ENCODE measurements at regions of chr10 and their contacts with region 1.

Region 1: DNA sequence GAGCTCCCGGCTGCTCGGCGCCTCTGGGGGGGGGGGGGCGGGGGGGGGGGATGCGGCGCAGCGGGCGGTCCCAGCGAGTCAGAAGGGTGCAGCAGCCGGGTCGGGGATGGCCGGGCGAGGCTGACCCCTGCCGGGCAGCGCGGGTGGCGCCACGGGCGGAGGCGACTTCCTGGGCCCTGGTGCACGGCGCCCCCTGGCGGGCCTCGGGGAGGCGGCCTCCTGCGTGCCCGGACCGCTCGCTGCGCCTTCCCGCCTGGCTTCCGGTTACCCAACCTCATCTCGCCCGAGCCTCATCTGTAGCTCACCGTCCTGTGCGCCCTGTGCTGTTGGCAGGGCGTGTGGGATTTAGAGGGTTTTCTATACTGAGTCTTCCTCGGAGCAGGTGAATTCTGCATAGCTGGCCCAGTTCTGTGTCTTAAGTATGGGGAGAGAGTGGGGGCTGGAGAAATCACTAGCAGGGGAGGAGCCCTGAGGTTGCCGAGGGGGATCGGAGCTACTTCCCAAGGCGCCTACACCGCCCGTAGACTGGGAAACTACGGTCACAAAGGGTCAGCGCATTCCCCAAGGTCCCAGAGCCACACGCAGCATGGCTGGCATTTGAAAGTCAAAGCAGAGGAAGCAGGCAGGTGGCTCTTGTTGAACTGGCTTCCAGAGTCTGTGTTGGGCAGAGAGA is 28.3 kb upstream of the WDFY4 start:
- DNase-seq: peak in 1 of 2 donors; percentile 96
- H3K4me3 ChIP-seq: peak overlapping the region; percentile 52 to 72
- H3K27ac ChIP-seq: peak overlapping the region; percentile 77 to 79
- H3K4me1 ChIP-seq: peaks cover 3 to 4% of the 10 kb centered on the region in 2 donors
- H3K27me3 ChIP-seq: no peaks in the 10 kb centered on the region
- CTCF ChIP-seq: peak; percentile 78 to 100 (median 89)

Region 2: GRCh38 chr10:48306265-48306869 is 350.0 kb before region 1 on chr10 and contains the start of gene MAPK8:
- intact Hi-C with region 1: loop called (anchors 2 kb)
- DNase-seq: peak; percentile 71 to 95
- H3K4me3 ChIP-seq: peak within 1 kb of the TSS; percentile 88 to 99
- H3K27ac ChIP-seq: peak within 1 kb of the TSS; percentile 94 to 96
- H3K4me1 ChIP-seq: peaks cover 0 to 7% of the 10 kb centered on the region in 2 donors
- H3K27me3 ChIP-seq: no peaks in the 10 kb centered on the region
- CTCF ChIP-seq: no peak
- total RNA-seq, gene MAPK8: 7.7 TPM

Region 3: GRCh38 chr10:48523820-48524758 is 132.3 kb before region 1 on chr10:
- intact Hi-C with region 1: loop called (anchors 10 kb)
- DNase-seq: no peak
- H3K4me3 ChIP-seq: peak overlapping the region; percentile 54 to 71
- H3K27ac ChIP-seq: peak overlapping the region in 1 of 2 donors; percentile 28
- H3K4me1 ChIP-seq: peaks cover 0 to 15% of the 10 kb centered on the region in 2 donors
- H3K27me3 ChIP-seq: no peaks in the 10 kb centered on the region
- CTCF ChIP-seq: peak; percentile 30 to 50 (median 39)

Region 4: GRCh38 chr10:48608976-48609375 is 47.4 kb before region 1 on chr10:
- intact Hi-C with region 1: loop called (anchors 1 kb)
- DNase-seq: no peak
- H3K4me3 ChIP-seq: no peak overlapping the region
- H3K27ac ChIP-seq: no peak overlapping the region
- H3K4me1 ChIP-seq: peaks cover 8% of the 10 kb centered on the region in 2 donors
- H3K27me3 ChIP-seq: no peaks in the 10 kb centered on the region
- CTCF ChIP-seq: no peak

Region 5: GRCh38 chr10:50624866-50625692 is 1968.7 kb after region 1 on chr10:
- intact Hi-C with region 1: loop called (anchors 10 kb)
- DNase-seq: peak; percentile 17 to 85
- H3K4me3 ChIP-seq: peak overlapping the region; percentile 72 to 85
- H3K27ac ChIP-seq: peak overlapping the region; percentile 97 to 98
- H3K4me1 ChIP-seq: peaks cover 0 to 10% of the 10 kb centered on the region in 2 donors
- H3K27me3 ChIP-seq: no peaks in the 10 kb centered on the region
- CTCF ChIP-seq: peak; percentile 56 to 76 (median 69)

Measured in ascending aorta (tissue), 2 donors.